Endothelial cell of umbilical vein (primary cell): ENCODE measurements at regions of chr6 and their contacts with region 1.

Region 1: DNA sequence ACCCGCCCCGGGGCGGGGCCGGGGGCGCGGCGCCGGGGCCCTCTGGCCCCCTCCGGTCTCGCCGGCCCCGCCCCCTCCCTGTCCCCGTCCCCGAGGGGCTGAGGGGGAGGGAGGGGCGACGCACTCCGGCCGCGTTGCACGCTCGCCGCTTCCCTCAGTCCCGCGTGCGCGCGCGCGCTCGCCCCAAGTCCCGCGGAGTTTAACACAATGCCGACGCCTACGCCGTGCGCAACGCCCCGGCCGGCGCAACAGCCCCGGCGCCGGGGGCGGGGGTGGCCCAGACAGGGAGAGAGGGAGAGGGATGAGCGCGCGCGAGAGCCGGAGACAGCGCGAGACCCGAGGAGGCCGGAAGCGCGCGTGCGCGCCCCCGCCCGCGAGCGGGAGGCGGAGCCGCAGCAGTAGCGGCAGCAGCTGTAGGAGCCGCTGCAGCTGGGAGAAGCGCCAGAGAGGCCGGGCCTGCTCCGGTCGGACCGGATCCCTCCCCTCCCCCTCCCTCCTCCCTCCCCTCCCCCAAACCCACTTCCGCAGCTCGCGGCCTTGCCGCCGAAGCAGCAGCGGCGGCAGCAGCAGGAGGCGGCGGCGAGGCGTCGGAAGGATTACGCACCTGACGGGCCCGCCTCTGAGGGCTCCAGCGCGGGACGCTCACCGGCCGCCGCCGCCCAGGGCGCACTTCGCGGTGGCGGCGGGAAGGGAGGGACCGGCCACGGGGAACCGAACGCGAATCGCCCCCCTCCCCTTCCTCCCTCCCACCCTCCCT is 905 bp downstream of the ZBTB2 start:
- DNase-seq: peak; percentile 99
- H3K4me3 ChIP-seq: peak overlapping the region; percentile 17 to 93 (median 86)
- H3K27ac ChIP-seq: peak overlapping the region; percentile 94
- H3K4me1 ChIP-seq: peaks cover 28% of the 10 kb centered on the region
- H3K27me3 ChIP-seq: no peaks in the 10 kb centered on the region
- CTCF ChIP-seq: peak in 1 of 2 donors; percentile 4
- POLR2A ChIP-seq: peak; percentile 80

Region 2: DNA sequence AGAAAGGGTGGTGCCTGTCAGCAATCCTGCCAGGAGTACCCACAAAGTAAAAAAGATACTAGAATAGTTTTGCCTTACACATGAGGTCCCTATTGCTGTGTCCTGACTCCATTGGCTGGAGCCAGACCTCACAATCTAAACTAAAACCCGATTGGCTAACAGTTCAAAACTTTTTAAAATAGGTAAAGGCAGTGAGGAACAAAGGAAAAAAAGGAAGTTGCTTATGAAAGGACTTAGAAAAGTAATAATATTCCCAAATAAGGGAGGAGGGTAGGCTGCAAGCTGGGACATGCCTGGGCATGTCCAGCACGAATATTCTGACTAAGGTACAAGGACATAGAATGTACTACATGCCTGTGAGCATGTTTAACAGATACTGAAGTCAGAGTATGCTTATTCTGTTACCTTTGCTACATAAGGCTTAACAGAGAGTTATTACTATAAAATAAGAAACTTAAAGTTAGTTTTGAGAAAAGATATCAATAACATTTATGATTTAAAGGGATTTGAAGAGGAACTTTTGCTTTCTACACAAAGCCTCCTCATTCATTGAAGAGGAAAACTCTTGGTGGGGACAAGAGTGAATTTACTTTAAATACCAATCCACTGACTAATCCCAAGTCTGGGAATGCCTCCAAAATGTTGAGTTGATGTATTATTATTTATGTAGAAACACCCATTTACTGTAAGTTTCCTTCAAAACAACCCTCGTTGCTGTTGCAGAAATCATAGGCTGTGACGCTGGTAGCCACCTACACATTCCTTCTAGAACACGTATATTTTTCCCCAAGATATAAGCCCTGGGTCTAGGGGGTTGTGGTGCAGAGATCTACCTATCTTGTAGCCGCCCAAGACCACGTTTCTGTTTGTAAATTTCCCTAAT is 533.2 kb before region 1 on chr6:
- CTCF ChIA-PET with region 1: no interaction called
- POLR2A ChIA-PET with region 1: no interaction called
- dilution Hi-C with region 1: no loop called
- intact Hi-C with region 1: loop called (anchors 1 kb)
- DNase-seq: peak; percentile 99
- H3K4me3 ChIP-seq: no peak overlapping the region
- H3K27ac ChIP-seq: peak overlapping the region; percentile 100
- H3K4me1 ChIP-seq: peaks cover 24% of the 10 kb centered on the region
- H3K27me3 ChIP-seq: no peaks in the 10 kb centered on the region
- CTCF ChIP-seq: no peak
- POLR2A ChIP-seq: peak; percentile 83

Region 3: DNA sequence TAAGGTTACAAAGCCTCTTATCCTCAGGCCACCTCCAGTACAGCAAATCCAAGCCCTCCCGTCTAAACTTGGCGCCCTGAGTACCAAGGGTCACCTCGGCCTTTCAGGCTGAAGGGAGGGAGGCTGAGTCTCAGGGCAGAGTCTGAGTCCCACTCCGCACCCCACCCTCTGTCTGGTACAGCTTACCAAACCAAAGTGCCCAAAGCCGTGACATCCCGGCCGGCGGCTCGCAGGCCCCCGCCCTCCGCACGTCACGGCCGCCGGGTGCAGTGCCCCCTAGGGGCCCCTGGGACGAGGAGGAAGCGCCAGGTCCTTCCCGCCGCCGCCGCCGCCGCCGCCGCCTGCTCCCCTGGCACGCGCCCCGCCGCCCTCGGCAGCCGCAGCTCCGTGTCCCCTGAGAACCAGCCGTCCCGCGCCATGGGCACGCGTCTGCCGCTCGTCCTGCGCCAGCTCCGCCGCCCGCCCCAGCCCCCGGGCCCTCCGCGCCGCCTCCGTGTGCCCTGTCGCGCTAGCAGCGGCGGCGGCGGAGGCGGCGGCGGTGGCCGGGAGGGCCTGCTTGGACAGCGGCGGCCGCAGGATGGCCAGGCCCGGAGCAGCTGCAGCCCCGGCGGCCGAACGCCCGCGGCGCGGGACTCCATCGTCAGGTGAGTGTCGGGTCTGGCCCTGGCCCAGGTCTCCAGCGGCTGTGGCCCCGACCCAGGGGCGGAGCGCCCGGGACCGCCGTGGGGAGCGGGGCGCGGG is 524.9 kb before region 1 on chr6 and contains the start of gene MTHFD1L:
- CTCF ChIA-PET with region 1: no interaction called
- POLR2A ChIA-PET with region 1: interaction called, 8 read pairs
- dilution Hi-C with region 1: no loop called
- intact Hi-C with region 1: loop called (anchors 1 kb)
- DNase-seq: peak; percentile 86
- H3K4me3 ChIP-seq: peak within 1 kb of the TSS; percentile 90 to 93 (median 92)
- H3K27ac ChIP-seq: peak within 1 kb of the TSS; percentile 93
- H3K4me1 ChIP-seq: peaks cover 25% of the 10 kb centered on the region
- H3K27me3 ChIP-seq: no peaks in the 10 kb centered on the region
- CTCF ChIP-seq: peak; percentile 58 to 62
- POLR2A ChIP-seq: peak; percentile 60
- total RNA-seq, gene MTHFD1L: 120 and 121 TPM in 2 replicates

Region 4: GRCh38 chr6:151341481-151342195 is 48.8 kb before region 1 on chr6:
- CTCF ChIA-PET with region 1: no interaction called
- POLR2A ChIA-PET with region 1: no interaction called
- dilution Hi-C with region 1: no loop called
- intact Hi-C with region 1: no loop called
- DNase-seq: no peak
- H3K4me3 ChIP-seq: no peak overlapping the region
- H3K27ac ChIP-seq: no peak overlapping the region
- H3K4me1 ChIP-seq: no peaks in the 10 kb centered on the region
- H3K27me3 ChIP-seq: no peaks in the 10 kb centered on the region
- CTCF ChIP-seq: no peak
- POLR2A ChIP-seq: no peak

Region 5: GRCh38 chr6:151370509-151371078 is 19.9 kb before region 1 on chr6:
- CTCF ChIA-PET with region 1: interaction called, 7 read pairs
- POLR2A ChIA-PET with region 1: interaction called, 14 read pairs
- dilution Hi-C with region 1: no loop called
- intact Hi-C with region 1: loop called (anchors 1 kb)
- DNase-seq: peak; percentile 42
- H3K4me3 ChIP-seq: no peak overlapping the region
- H3K27ac ChIP-seq: no peak overlapping the region
- H3K4me1 ChIP-seq: peaks cover 25% of the 10 kb centered on the region
- H3K27me3 ChIP-seq: no peaks in the 10 kb centered on the region
- CTCF ChIP-seq: peak; percentile 9 to 21
- POLR2A ChIP-seq: no peak

Region 6: DNA sequence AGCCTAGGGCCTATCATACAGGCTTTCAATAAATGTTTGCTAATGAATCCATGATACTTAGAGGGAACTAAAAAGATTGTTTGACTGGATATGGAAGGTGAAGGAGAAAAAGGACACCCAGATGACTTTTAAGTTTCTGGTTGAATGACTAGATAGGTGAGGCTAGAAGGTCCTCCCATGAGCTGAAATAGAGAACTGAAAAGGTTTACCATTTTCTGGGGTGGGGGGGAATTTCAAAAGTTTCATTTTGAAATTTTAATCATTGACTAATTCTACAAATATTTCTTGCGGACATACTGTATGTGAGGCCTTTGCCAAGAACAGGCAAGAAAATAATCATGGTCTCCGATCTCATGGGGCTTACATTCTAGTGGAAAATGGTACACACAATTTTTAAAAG is 18.8 kb after region 1 on chr6:
- CTCF ChIA-PET with region 1: interaction called, 23 read pairs
- POLR2A ChIA-PET with region 1: no interaction called
- dilution Hi-C with region 1: no loop called
- intact Hi-C with region 1: no loop called
- DNase-seq: no peak
- H3K4me3 ChIP-seq: no peak overlapping the region
- H3K27ac ChIP-seq: no peak overlapping the region
- H3K4me1 ChIP-seq: no peaks in the 10 kb centered on the region
- H3K27me3 ChIP-seq: no peaks in the 10 kb centered on the region
- CTCF ChIP-seq: no peak
- POLR2A ChIP-seq: no peak